K562 (cell line): ENCODE measurements at regions of chr6 and their contacts with region 1.

Region 1: GRCh38 chr6:123393328-123393727 is 243.4 kb downstream of the TRDN start:
- DNase-seq: peak in 1 of 4 experiments; percentile 8
- ATAC-seq: no peak
- H3K4me3 ChIP-seq: no peak overlapping the region
- H3K27ac ChIP-seq: no peak overlapping the region
- H3K4me1 ChIP-seq: no peaks in the 10 kb centered on the region
- H3K27me3 ChIP-seq: no peaks in the 10 kb centered on the region
- CTCF ChIP-seq: peak in 1 of 3 experiments; percentile 49; a peak in 2 of 6 replicates
- EP300 ChIP-seq: no peak
- POLR2A ChIP-seq: no peak
- RAD21 ChIP-seq: peak; percentile 51 to 81

Region 2: DNA sequence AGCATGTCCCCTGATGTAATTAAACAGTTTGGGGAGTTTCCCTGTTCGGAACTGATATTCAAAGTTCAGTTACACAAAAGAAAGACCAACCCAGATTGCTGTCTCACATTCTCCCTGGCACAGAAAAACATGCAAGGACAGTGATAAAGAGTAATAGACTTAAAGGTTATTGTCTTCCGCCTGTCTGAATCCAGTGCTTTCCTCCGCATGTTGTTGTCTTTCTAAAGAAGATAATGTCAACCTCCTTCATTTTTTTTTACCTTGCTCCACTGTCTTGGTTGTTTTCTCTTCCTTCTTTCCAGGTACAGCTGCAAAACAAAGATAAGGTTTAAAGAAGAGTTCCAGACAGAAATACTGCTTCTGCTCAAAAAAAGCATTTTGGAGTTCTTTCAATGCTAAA is 41.0 kb before region 1 on chr6:
- CTCF ChIA-PET with region 1: no interaction called
- POLR2A ChIA-PET with region 1: no interaction called
- in situ Hi-C with region 1: no loop called
- intact Hi-C with region 1: no loop called
- DNase-seq: peak in 2 of 4 experiments; percentile 30 to 57
- ATAC-seq: peak; percentile 82
- H3K4me3 ChIP-seq: no peak overlapping the region
- H3K27ac ChIP-seq: peak overlapping the region; percentile 36; the same call in 1 of the 3 replicates
- H3K4me1 ChIP-seq: no peaks in the 10 kb centered on the region; a peak in 1 of 5 replicates
- H3K27me3 ChIP-seq: no peaks in the 10 kb centered on the region
- CTCF ChIP-seq: no peak
- EP300 ChIP-seq: peak; percentile 26; the same call in 1 of the 2 replicates
- POLR2A ChIP-seq: no peak
- RAD21 ChIP-seq: no peak

Region 3: DNA sequence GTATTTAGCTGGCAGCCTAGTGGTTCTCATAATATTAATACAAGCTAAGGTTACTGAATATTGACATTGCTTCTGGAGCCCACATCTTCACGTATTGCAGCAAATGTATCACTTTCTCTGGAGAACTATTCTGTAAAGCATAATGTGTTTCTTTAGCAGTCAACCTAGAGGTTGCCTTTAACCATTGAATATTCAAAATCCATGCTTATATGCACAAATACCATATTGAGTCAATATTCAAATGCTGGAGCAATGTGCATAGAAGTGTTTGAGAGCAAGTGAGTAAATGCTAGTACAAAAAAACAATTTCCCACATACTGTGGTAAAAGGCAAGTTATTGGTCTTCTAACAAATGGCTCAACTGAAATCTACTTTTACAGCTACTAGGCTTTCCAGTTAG is 11.6 kb after region 1 on chr6:
- CTCF ChIA-PET with region 1: no interaction called
- POLR2A ChIA-PET with region 1: no interaction called
- in situ Hi-C with region 1: no loop called
- intact Hi-C with region 1: no loop called
- DNase-seq: no peak
- ATAC-seq: no peak
- H3K4me3 ChIP-seq: no peak overlapping the region
- H3K27ac ChIP-seq: no peak overlapping the region
- H3K4me1 ChIP-seq: no peaks in the 10 kb centered on the region
- H3K27me3 ChIP-seq: no peaks in the 10 kb centered on the region
- CTCF ChIP-seq: no peak
- EP300 ChIP-seq: no peak
- POLR2A ChIP-seq: no peak
- RAD21 ChIP-seq: no peak

Region 4: GRCh38 chr6:123715006-123715875 is 321.9 kb after region 1 on chr6:
- CTCF ChIA-PET with region 1: interaction called, 8 read pairs
- POLR2A ChIA-PET with region 1: no interaction called
- in situ Hi-C with region 1: no loop called
- intact Hi-C with region 1: loop called (anchors 1 kb)
- DNase-seq: peak in 3 of 4 experiments; percentile 7 to 31 (median 8)
- ATAC-seq: peak; percentile 53; the same call in 2 of the 3 replicates
- H3K4me3 ChIP-seq: no peak overlapping the region
- H3K27ac ChIP-seq: no peak overlapping the region
- H3K4me1 ChIP-seq: no peaks in the 10 kb centered on the region; a peak in 1 of 5 replicates
- H3K27me3 ChIP-seq: no peaks in the 10 kb centered on the region
- CTCF ChIP-seq: peak; percentile 35 to 52 (median 35); a peak in 3 of 6 replicates
- EP300 ChIP-seq: no peak
- POLR2A ChIP-seq: no peak
- RAD21 ChIP-seq: peak; percentile 75 to 83

Region 5: DNA sequence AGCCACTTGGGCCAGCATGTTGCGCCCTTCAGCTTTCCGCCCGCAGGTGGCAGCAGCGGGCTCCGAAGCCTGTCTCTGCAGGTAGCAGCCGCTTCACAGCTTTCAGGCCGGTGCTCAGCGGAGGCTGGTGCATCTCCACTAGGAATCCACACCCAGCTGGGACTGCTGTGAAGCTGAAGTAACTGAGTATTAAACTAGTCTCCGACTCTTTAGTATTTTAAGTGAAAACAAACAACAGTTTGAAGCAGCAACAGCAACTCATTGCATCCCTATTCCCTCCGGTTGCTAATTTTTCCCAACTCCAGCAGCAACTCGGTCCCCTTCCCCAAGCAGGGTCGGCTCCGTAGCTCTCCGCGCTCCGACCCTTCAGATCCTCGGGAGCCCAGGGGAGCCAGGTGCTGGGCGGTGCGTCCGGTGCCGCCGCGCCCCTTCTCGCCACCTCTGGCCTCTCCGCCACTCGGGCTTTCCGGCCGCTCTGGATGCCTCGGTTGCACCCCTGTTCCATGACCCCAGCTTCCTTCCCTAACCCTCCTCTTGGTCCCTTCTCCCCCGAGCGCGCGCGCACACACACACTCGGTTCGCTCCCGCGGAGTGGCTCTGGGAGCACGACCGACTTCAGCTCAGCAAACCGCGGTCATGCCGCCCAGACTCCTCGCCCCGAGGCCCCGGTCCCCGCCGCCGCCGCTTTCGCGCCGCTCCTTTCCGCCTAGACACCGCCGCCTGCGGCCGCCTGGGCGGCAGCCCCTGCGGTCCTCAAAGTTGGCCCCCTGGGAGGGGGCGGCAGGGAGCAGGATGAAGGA is 409.6 kb after region 1 on chr6:
- CTCF ChIA-PET with region 1: no interaction called
- POLR2A ChIA-PET with region 1: no interaction called
- in situ Hi-C with region 1: no loop called
- intact Hi-C with region 1: loop called (anchors 5 kb)
- DNase-seq: peak; percentile 37 to 56 (median 50)
- ATAC-seq: peak; percentile 86
- H3K4me3 ChIP-seq: no peak overlapping the region
- H3K27ac ChIP-seq: no peak overlapping the region
- H3K4me1 ChIP-seq: no peaks in the 10 kb centered on the region
- H3K27me3 ChIP-seq: no peaks in the 10 kb centered on the region
- CTCF ChIP-seq: peak; percentile 43 to 57 (median 51); a peak in 5 of 6 replicates
- EP300 ChIP-seq: no peak
- POLR2A ChIP-seq: no peak
- RAD21 ChIP-seq: peak; percentile 23 to 53; a peak in 3 of 4 replicates

Region 6: GRCh38 chr6:124854338-124854922 is 1461.1 kb after region 1 on chr6:
- CTCF ChIA-PET with region 1: no interaction called
- POLR2A ChIA-PET with region 1: no interaction called
- in situ Hi-C with region 1: no loop called
- intact Hi-C with region 1: loop called (anchors 10 kb)
- DNase-seq: no peak
- ATAC-seq: no peak
- H3K4me3 ChIP-seq: no peak overlapping the region
- H3K27ac ChIP-seq: no peak overlapping the region
- H3K4me1 ChIP-seq: no peaks in the 10 kb centered on the region
- H3K27me3 ChIP-seq: no peaks in the 10 kb centered on the region
- CTCF ChIP-seq: peak in 1 of 3 experiments; percentile 37; a peak in 2 of 6 replicates
- EP300 ChIP-seq: no peak
- POLR2A ChIP-seq: no peak
- RAD21 ChIP-seq: peak in 1 of 2 experiments; percentile 56; a peak in 3 of 4 replicates